Motor neuron (in vitro differentiated cells): ENCODE measurements at regions of chr13 and their contacts with region 1.

Region 1: DNA sequence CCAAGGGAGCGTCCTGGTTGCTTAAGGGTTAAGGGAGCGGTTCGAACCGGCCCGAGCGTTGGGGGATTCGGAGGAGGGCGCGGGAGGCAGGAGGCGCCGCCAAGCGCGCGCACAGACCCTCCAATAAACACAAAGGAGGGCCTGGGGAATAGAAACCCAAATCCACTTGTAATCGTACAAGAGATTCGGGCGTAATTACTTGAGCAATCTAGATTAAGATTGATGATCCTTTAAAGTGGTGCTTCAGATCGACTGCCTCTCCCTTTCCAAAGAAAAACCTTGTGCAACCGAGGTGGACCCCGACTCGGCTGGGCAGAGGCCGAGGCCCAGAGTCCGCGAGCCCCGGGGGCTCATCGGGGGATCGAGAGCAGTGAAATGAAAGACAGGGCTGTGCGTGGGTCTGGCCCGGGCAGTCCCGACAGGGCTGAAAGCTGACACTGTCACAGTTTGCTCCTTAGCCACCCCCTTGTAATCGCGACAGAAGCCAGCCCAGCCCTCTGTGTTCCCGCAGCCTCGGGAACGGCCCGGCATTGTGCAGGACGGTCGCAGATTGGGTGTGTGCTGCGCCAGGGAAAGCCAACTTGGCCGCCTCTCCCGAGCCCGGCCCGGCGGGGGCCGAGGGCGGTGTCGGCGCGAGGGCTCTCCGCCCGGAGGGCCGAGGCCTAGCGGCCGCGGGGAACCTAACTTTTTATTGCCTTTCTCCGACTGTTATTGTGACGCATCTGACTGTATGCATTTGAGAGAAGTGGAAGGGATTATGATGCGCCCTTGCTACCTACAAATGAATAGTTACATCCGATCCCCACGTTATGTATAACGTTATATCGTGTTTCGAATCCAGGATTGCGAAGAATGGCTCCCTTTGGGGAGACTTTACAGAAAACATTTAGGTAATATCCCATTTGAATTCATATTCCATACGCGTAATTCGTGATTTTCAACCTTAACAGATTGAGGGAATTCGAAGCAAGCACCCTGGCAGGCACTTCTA is 5.5 kb downstream of the MAB21L1 start:
- ATAC-seq: peak in 7 of 8 experiments; percentile 66 to 90 (median 84)
- H3K4me3 ChIP-seq: peak overlapping the region; percentile 8 to 33 (median 30)
- H3K27ac ChIP-seq: no peak overlapping the region
- H3K4me1 ChIP-seq: peaks cover 0 to 4% of the 10 kb centered on the region in 2 donors

Region 2: GRCh38 chr13:34587576-34587975 is 883.4 kb before region 1 on chr13:
- in situ Hi-C with region 1: no loop called
- ATAC-seq: no peak
- H3K4me3 ChIP-seq: no peak overlapping the region
- H3K27ac ChIP-seq: no peak overlapping the region
- H3K4me1 ChIP-seq: no peaks in the 10 kb centered on the region

Region 3: DNA sequence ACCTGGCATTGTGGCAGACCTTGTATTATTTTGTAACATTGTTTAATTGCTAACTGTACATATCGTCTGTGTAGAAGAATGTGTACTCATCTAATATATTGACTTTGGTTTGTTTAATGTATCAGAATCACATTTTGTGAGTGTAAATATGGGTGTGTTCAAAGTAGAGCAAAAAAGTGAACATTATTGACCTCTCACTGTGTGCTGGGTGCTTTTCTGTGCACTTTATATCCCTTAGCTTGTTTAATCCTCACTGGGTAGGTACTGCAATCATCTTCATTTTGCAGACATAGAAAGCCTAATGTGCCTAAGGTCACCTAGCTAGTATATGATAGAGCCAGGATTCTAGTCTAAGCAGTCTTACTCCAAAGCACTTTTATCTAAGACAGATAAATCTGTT is 239.5 kb before region 1 on chr13:
- in situ Hi-C with region 1: no loop called
- ATAC-seq: no peak
- H3K4me3 ChIP-seq: no peak overlapping the region
- H3K27ac ChIP-seq: no peak overlapping the region
- H3K4me1 ChIP-seq: no peaks in the 10 kb centered on the region

Region 4: DNA sequence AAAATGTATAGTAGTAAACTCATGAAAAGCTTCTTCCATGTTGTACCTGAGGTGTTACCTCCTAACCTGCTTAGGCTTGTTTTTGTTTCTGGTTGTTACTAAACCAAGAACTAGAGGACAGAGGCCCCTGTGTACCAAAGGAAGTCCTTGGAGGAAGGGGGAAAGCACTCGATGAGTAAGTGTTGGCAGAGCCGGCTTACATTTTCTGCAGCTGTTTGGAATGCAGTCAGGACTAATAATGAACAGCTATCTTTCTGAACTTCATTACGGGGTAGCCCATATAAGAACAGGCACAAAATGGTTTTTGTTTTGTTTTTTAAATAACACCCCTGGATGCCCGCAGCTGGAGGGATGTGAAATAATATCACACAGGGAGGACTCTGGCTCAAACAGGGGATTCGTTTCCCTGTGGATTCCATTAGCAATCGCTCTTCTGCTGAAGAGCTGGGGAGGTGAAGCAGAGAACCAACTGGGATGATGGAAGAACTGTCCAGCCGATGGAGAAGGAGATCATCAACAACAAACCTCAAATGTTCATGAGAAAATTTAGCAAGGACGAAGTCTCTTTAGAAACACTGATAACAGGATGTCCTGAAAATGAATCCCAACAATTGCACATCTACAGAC is 219.7 kb after region 1 on chr13:
- in situ Hi-C with region 1: no loop called
- ATAC-seq: no peak
- H3K4me3 ChIP-seq: no peak overlapping the region
- H3K27ac ChIP-seq: no peak overlapping the region
- H3K4me1 ChIP-seq: no peaks in the 10 kb centered on the region

Region 5: DNA sequence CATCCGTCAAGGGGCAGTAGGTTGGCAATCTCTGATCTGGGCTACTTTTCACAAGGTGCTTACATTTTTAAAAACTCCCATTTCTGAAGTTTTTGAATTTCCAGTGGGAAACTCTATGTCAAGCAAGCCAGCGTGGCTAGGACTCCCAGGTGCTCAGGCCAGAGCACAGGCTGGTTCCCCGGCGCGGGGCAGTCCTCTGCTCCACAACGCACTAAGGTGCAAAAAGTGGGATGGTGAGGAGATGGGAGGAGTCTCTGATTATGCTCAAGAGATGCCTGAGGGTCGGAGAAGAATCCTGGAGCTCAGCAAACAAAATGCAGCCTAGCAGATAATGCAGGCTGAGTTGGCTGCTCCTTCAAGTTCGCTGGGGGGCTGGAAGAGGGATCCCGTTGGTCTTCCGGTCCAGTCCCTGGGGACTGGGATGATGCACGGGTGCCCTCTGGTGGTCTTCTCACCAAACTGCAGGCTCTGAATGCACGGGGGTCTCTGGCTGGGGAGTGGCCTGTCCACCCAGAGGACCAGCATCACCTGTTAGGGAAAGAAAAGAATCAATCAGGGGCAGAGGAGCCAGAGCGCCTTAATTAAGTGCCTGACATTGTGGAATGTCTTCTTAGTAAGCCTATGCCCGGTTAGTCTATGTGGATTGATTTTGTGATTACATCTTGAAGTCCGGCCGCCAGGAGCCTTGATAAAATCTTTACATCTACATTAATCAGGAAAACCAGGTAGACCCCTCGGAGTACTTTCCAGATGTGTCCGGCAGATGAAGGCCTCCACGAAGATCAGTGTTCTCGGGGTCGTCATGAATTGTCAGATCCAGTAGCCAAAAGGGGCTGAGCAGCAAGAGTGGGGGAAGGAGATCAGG is 250.0 kb after region 1 on chr13:
- in situ Hi-C with region 1: loop called in 1 of 9 experiments (anchors 25 kb)
- ATAC-seq: peak; percentile 56 to 95 (median 74)
- H3K4me3 ChIP-seq: no peak overlapping the region
- H3K27ac ChIP-seq: no peak overlapping the region
- H3K4me1 ChIP-seq: no peaks in the 10 kb centered on the region